ENCODE measurements at regions of chr1 and their contacts with region 1.

Region 1: GRCh38 chr1:161225534-161226319 is at the start of gene TOMM40L:
- DNase-seq: peak; percentile 92
- ATAC-seq: peak; percentile 98
- total RNA-seq, gene TOMM40L: 11.0 TPM

Region 2: GRCh38 chr1:161192476-161193465 is 33.0 kb before region 1 on chr1:
- intact Hi-C with region 1: no loop called
- DNase-seq: peak; percentile 82
- ATAC-seq: peak; percentile 70

Region 3: GRCh38 chr1:161274874-161275273 is 49.1 kb after region 1 on chr1:
- intact Hi-C with region 1: no loop called
- DNase-seq: no peak
- ATAC-seq: no peak

Region 4: DNA sequence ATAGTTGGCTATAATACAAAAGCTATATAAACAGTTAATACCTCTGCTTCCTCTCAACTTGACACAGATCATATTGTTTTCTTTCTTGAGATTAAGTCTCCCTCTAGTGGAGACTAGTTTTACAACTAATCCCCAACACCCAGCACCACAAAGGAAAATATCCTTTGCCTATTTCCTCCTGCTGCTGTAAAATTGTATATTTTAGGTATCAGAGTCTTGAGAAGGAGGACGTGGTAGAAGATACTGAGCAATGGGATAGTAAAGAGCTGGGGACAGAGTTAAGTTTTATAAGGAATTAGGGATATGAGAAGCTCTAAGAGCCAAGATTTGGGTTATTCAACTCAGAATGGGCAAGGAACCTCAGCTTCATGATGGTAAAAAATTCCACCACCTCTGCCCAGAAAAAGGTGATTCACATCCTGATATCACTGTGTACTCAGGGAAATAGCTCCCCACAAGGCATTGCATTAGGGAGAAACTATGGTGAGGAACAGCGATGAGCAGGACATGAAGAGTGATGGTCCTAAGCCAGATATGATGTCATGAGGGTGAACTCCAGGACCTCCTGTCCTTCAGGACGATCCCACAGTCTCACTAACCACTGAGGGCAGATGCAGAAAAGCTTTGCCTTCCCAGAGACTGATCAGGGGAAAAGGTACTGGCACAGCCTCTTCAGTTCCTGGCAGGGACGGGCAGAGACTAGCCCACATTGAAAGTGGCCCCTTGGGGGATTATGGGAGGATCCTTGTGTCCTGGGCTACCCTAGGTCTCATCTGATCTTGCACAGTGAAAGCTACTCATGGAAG is 156.7 kb after region 1 on chr1:
- intact Hi-C with region 1: loop called (anchors 5 kb)
- DNase-seq: no peak
- ATAC-seq: peak; percentile 88

Measured in sciatic nerve (tissue), 2 donors.